Panc1 (cell line): ENCODE measurements at regions of chr22 and their contacts with region 1.

Region 1: GRCh38 chr22:48931452-48931851 is 896.2 kb downstream of the BRD1 start:
- DNase-seq: no peak
- ATAC-seq: no peak
- H3K4me3 ChIP-seq: no peak overlapping the region
- H3K27ac ChIP-seq: no peak overlapping the region
- H3K4me1 ChIP-seq: no peaks in the 10 kb centered on the region
- H3K27me3 ChIP-seq: no peaks in the 10 kb centered on the region; the same call in 1 of the 2 replicates
- CTCF ChIP-seq: no peak

Region 2: DNA sequence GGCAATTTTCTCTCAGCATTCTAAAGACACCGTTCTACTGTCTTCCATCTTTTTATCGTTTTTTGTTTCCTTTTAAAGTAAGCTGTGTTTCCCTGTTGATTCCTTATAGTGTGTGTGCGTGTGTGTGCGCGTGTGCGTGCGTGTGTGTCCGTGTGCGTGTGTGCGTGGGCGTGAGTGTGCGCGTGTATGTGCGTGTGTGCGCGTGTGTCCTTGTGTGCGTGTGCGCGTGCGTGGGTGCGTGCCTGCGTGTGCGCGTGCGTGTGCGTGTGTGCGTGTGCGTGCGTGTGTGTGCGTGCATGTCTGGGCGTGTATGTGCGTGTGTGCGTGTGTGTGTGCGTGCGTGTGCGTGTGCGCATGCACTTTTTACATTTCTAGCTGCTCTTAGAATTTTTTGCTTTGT is 137.5 kb before region 1 on chr22:
- CTCF ChIA-PET with region 1: interaction called, 10 read pairs
- POLR2A ChIA-PET with region 1: no interaction called
- in situ Hi-C with region 1: no loop called
- intact Hi-C with region 1: no loop called
- DNase-seq: no peak
- ATAC-seq: no peak
- H3K4me3 ChIP-seq: no peak overlapping the region
- H3K27ac ChIP-seq: no peak overlapping the region
- H3K4me1 ChIP-seq: no peaks in the 10 kb centered on the region
- H3K27me3 ChIP-seq: no peaks in the 10 kb centered on the region
- CTCF ChIP-seq: no peak

Region 3: DNA sequence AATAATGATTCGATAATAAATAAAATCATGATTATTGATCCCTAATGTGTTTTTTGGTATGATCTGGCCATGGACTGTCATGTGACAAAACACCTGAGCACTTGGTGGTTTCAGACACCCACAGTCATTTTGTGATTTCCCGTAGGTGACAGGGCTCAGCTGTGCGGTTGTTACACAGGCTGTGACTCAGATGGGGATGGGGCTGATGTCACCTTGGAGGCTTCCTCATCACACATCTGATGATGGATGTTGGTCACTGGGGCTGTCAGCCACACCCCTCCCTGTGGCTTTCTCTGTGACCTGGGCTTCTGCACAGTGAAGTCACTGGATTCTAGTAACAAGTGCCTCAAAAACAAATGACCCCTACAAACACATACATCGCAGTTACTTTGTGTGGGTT is 98.9 kb before region 1 on chr22:
- CTCF ChIA-PET with region 1: no interaction called
- POLR2A ChIA-PET with region 1: no interaction called
- in situ Hi-C with region 1: no loop called
- intact Hi-C with region 1: no loop called
- DNase-seq: no peak
- ATAC-seq: no peak
- H3K4me3 ChIP-seq: no peak overlapping the region
- H3K27ac ChIP-seq: no peak overlapping the region
- H3K4me1 ChIP-seq: no peaks in the 10 kb centered on the region
- H3K27me3 ChIP-seq: no peaks in the 10 kb centered on the region
- CTCF ChIP-seq: no peak